MCF 10A (cell line): ENCODE measurements at regions of chr6 and their contacts with region 1.

Region 1: GRCh38 chr6:99349171-99350141 is at the start of gene FAXC:
- DNase-seq: peak; percentile 73
- H3K4me3 Mint-ChIP-seq: peak within 1 kb of the TSS; percentile 63
- H3K27ac Mint-ChIP-seq: no peak within 1 kb of the TSS
- H3K4me1 Mint-ChIP-seq: peaks cover 1% of the 10 kb centered on the region
- H3K27me3 Mint-ChIP-seq: peaks cover 13% of the 10 kb centered on the region
- CTCF ChIP-seq: no peak
- total RNA-seq, gene FAXC: 2.3 and 3.6 TPM in 2 replicates

Region 2: GRCh38 chr6:99338188-99338587 is 11.3 kb before region 1 on chr6:
- CTCF ChIA-PET with region 1: interaction called, 92 read pairs
- POLR2A ChIA-PET with region 1: interaction called, 14 read pairs
- intact Hi-C with region 1: loop called (anchors 1 kb)
- DNase-seq: no peak
- H3K4me3 Mint-ChIP-seq: no peak overlapping the region
- H3K27ac Mint-ChIP-seq: no peak overlapping the region
- H3K4me1 Mint-ChIP-seq: peaks cover 9% of the 10 kb centered on the region
- H3K27me3 Mint-ChIP-seq: no peaks in the 10 kb centered on the region
- CTCF ChIP-seq: no peak

Region 3: GRCh38 chr6:99393698-99394531 is 44.5 kb after region 1 on chr6 and contains the start of gene COQ3:
- CTCF ChIA-PET with region 1: interaction called, 7 read pairs
- POLR2A ChIA-PET with region 1: interaction called, 13 read pairs
- intact Hi-C with region 1: no loop called
- DNase-seq: peak; percentile 76
- H3K4me3 Mint-ChIP-seq: peak within 1 kb of the TSS; percentile 93
- H3K27ac Mint-ChIP-seq: peak within 1 kb of the TSS; percentile 96
- H3K4me1 Mint-ChIP-seq: peaks cover 6% of the 10 kb centered on the region
- H3K27me3 Mint-ChIP-seq: no peaks in the 10 kb centered on the region
- CTCF ChIP-seq: no peak
- total RNA-seq, gene COQ3: 4.8 and 7.7 TPM in 2 replicates